ENCODE measurements at regions of chr5 and their contacts with region 1.

Region 1: GRCh38 chr5:158796812-158797497 is 302.8 kb downstream of the EBF1 start:
- DNase-seq: no peak
- ATAC-seq: peak; percentile 70
- H3K4me3 ChIP-seq: no peak overlapping the region
- H3K27ac ChIP-seq: peak overlapping the region in 1 of 2 donors; percentile 67
- H3K4me1 ChIP-seq: peaks cover 0 to 24% of the 10 kb centered on the region in 2 donors
- H3K27me3 ChIP-seq: no peaks in the 10 kb centered on the region

Region 2: GRCh38 chr5:158758675-158759074 is 38.3 kb before region 1 on chr5:
- intact Hi-C with region 1: loop called (anchors 5 kb)
- DNase-seq: no peak
- ATAC-seq: no peak
- H3K4me3 ChIP-seq: no peak overlapping the region
- H3K27ac ChIP-seq: no peak overlapping the region
- H3K4me1 ChIP-seq: peaks cover 11 to 15% of the 10 kb centered on the region in 2 donors
- H3K27me3 ChIP-seq: no peaks in the 10 kb centered on the region

Region 3: GRCh38 chr5:159100025-159100781 is 303.2 kb after region 1 on chr5:
- intact Hi-C with region 1: loop called (anchors 2 to 10 kb)
- DNase-seq: peak; percentile 95 to 97
- ATAC-seq: peak; percentile 94
- H3K4me3 ChIP-seq: peak overlapping the region; percentile 55 to 94
- H3K27ac ChIP-seq: peak overlapping the region; percentile 17 to 80
- H3K4me1 ChIP-seq: no peaks in the 10 kb centered on the region
- H3K27me3 ChIP-seq: no peaks in the 10 kb centered on the region

Measured in aorta (tissue), 5 donors.